ENCODE measurements at regions of chr1 and their contacts with region 1.

Region 1: DNA sequence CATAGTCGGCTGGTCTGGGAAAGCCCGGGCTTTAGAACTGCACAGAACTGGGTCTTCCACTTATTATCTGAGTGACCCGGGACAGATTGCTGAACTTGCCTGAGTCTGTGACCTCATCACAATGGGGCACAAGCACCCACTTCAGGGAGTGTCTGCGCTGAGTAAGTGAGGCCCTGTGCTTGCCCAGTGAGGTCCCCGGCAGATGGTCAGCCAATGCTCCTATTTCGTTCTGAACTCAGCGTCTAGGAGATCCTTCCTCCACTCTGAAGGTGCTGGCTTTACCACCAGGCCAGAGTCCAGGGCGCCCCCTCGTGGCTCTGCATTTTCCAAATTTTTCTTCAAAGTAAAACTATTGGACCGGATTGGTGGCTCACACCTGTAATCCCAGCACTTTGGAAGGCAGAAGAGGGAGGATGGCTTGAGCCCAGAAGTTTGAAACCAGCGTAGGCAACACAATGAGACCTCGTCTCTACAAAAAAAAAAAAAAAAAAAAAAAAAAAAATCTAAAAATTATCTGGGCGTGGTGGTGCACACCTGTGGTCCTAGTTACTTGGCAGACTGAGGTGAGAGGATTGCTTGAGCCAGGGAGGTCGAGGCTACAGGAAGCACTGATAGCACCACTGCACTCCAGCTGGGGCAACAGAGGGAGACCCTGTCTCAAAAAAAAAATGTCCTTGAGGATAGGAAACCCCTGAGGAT is 61.7 kb downstream of the FCRL5 start:
- DNase-seq: peak; percentile 35 to 59
- ATAC-seq: peak in 1 of 4 donors; percentile 19
- H3K4me3 ChIP-seq: no peak overlapping the region
- H3K27ac ChIP-seq: no peak overlapping the region
- H3K4me1 ChIP-seq: no peaks in the 10 kb centered on the region
- H3K27me3 ChIP-seq: no peaks in the 10 kb centered on the region
- CTCF ChIP-seq: peak; percentile 36

Region 2: DNA sequence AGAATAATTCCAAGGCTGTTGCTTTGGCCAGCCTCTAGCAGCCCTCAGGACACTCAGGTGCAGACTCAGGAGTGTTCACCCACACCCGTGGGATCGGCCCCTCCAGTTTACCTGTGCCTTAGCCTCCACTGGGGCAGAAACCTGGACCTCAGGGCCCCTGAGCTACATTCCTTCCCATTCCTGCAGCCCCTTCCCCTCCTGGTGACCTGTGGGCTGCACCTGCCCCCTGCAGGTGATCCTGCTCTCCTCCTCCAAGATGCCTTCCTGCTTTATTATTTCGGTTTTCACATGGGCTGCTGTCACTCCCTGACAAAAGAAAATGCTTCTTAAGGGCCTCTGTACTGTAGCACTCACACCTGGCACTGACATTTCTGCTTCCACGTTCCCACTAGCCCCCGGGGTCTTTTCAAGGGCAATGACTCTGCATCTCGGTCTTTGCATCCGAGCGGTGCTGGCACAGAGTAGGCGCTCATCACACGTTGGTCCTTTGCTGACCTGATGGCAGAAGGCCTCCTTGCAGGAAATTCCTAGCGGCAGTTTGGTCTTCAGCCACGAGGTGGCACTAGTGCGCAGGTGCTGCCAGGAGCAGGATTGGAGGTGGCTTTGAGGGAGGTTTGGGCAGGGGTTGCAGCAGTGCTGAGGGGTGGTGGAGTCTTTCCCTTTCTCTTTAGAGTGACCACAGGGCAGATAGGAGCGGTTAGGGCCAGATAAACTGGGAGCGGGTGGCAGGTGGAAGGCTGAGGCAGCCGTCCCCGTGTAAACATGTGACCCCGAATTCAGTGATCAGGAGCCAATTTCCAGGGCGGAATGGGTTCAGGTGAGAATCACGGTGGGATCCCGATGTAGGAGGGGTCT is 327.1 kb before region 1 on chr1:
- intact Hi-C with region 1: loop called (anchors 5 to 10 kb)
- DNase-seq: peak; percentile 70 to 80
- ATAC-seq: peak; percentile 61 to 83 (median 64)
- H3K4me3 ChIP-seq: peak overlapping the region; percentile 22
- H3K27ac ChIP-seq: no peak overlapping the region
- H3K4me1 ChIP-seq: no peaks in the 10 kb centered on the region
- H3K27me3 ChIP-seq: no peaks in the 10 kb centered on the region
- CTCF ChIP-seq: peak; percentile 84

Region 3: DNA sequence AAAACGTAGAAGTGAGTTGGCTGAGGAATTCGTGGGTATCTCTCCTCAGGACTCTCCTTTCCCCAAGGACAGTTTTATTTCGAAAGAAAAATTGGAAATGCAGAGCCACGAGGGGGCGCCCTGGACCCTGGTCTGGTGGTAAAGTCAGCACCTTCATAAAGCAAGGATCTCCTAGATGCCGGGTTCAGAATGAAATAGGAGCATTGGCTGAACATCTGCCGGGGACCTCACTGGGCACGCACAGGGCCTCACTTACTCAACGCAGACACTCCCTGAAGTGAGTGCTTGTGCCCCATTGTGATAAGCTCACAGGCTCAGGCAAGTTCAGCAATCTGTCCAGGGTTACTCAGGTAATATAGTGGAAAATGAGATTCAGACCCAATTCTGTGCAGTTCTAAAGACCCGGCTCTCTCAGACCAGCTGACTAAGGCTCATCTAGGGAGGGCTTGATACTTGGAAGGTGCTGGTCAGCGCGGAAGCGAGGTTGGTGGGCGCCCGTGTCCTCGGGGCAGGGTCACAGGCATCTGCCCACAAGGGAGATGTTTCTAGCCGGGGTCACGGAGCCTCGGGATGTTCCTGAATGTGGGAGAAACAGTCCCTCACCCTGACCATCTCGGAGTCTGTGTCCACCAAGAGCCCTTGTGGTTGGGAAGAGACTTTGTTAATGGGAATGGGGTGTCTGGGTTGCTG is 296.8 kb before region 1 on chr1:
- intact Hi-C with region 1: loop called in 1 of 2 experiments (anchors 5 kb)
- DNase-seq: peak in 1 of 2 donors; percentile 38
- ATAC-seq: no peak
- H3K4me3 ChIP-seq: no peak overlapping the region
- H3K27ac ChIP-seq: no peak overlapping the region
- H3K4me1 ChIP-seq: no peaks in the 10 kb centered on the region
- H3K27me3 ChIP-seq: peaks cover 0 to 41% (median 11%) of the 10 kb centered on the region in 3 donors
- CTCF ChIP-seq: peak; percentile 46

Region 4: DNA sequence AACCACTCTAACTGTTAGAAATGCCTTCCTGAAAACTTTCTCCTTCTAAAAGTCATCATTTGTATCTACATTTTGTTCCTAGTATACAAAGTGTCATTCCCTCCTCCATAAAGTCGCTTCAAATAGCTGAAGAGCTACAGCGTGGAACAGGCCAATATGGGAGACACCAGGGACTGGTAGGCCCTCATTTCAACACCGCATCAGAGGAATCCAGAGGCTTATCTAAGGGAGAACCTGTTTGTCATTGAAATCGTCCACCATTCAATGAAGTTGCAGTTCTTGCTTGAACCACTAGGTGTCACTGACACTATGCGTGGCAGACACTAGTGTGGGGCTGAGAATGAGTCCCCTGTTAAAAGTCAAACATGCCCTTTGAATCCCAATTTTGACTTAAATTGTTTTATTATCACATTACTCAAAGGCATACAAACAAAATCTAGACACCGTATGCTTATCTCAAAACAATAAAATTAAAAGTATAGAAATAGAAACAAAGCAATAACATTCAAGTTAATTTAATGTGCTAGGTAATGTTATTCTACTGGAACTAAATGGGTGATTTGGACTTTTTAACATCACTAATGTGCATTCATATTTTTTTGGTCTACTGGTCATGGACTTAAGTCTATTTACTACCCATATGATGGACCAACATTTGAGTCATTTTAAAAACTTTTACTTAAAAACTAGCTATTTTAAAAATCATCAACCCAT is 120.7 kb before region 1 on chr1:
- intact Hi-C with region 1: loop called (anchors 2 to 5 kb)
- DNase-seq: no peak
- ATAC-seq: peak in 3 of 4 donors; percentile 54 to 61 (median 55)
- H3K4me3 ChIP-seq: no peak overlapping the region
- H3K27ac ChIP-seq: no peak overlapping the region
- H3K4me1 ChIP-seq: no peaks in the 10 kb centered on the region
- H3K27me3 ChIP-seq: no peaks in the 10 kb centered on the region
- CTCF ChIP-seq: peak; percentile 90

Region 5: DNA sequence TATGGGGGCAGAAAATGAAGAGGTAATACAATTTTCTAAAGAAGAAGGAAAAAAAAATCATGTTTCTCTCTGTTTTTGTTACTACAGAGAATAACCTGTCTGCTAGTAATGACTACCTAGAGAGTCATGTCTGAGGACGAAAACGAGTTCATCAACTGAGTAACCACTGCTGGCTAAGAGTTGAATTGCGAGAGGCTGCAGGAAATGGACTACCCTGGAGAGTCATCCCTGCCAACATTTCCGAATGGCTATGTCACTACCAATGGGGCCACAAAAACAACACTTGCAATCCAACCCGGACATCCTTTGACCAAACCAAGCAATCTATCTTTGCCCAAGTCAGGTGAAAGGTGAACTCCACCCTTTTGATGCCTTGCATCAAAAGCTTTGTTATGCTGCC is 58.9 kb before region 1 on chr1:
- intact Hi-C with region 1: no loop called
- DNase-seq: no peak
- ATAC-seq: no peak
- H3K4me3 ChIP-seq: no peak overlapping the region
- H3K27ac ChIP-seq: no peak overlapping the region
- H3K4me1 ChIP-seq: no peaks in the 10 kb centered on the region
- H3K27me3 ChIP-seq: peaks cover 0 to 2% (median 0%) of the 10 kb centered on the region in 3 donors
- CTCF ChIP-seq: no peak

Region 6: GRCh38 chr1:157442065-157442464 is 48.6 kb before region 1 on chr1:
- intact Hi-C with region 1: no loop called
- DNase-seq: no peak
- ATAC-seq: no peak
- H3K4me3 ChIP-seq: no peak overlapping the region
- H3K27ac ChIP-seq: no peak overlapping the region
- H3K4me1 ChIP-seq: no peaks in the 10 kb centered on the region
- H3K27me3 ChIP-seq: no peaks in the 10 kb centered on the region
- CTCF ChIP-seq: no peak

Measured in psoas muscle (tissue), 8 donors.